Activated CD8-positive, alpha-beta T cell treated with anti-CD3 and anti-CD28 coated beads for 36 hours (primary cell): ENCODE measurements at regions of chr2 and their contacts with region 1.

Region 1: GRCh38 chr2:157327621-157328500 is 2.2 kb upstream of the ERMN start:
- DNase-seq: peak; percentile 95
- ATAC-seq: peak; percentile 93
- H3K4me3 Mint-ChIP-seq: peak overlapping the region; percentile 45
- H3K27ac Mint-ChIP-seq: peak overlapping the region; percentile 80
- H3K4me1 Mint-ChIP-seq: peaks cover 59% of the 10 kb centered on the region
- H3K27me3 Mint-ChIP-seq: no peaks in the 10 kb centered on the region
- CTCF ChIP-seq: peak; percentile 93

Region 2: GRCh38 chr2:157221394-157221988 is 106.4 kb before region 1 on chr2:
- CTCF ChIA-PET with region 1: no interaction called
- POLR2A ChIA-PET with region 1: no interaction called
- intact Hi-C with region 1: no loop called
- DNase-seq: no peak
- ATAC-seq: no peak
- H3K4me3 Mint-ChIP-seq: no peak overlapping the region
- H3K27ac Mint-ChIP-seq: no peak overlapping the region
- H3K4me1 Mint-ChIP-seq: no peaks in the 10 kb centered on the region
- H3K27me3 Mint-ChIP-seq: peaks cover 8% of the 10 kb centered on the region
- CTCF ChIP-seq: no peak

Region 3: GRCh38 chr2:157349949-157350515 is 22.2 kb after region 1 on chr2:
- CTCF ChIA-PET with region 1: interaction called, 166 read pairs
- POLR2A ChIA-PET with region 1: interaction called, 5 read pairs
- intact Hi-C with region 1: no loop called
- DNase-seq: no peak
- ATAC-seq: no peak
- H3K4me3 Mint-ChIP-seq: no peak overlapping the region
- H3K27ac Mint-ChIP-seq: no peak overlapping the region
- H3K4me1 Mint-ChIP-seq: peaks cover 43% of the 10 kb centered on the region
- H3K27me3 Mint-ChIP-seq: no peaks in the 10 kb centered on the region
- CTCF ChIP-seq: no peak

Region 4: DNA sequence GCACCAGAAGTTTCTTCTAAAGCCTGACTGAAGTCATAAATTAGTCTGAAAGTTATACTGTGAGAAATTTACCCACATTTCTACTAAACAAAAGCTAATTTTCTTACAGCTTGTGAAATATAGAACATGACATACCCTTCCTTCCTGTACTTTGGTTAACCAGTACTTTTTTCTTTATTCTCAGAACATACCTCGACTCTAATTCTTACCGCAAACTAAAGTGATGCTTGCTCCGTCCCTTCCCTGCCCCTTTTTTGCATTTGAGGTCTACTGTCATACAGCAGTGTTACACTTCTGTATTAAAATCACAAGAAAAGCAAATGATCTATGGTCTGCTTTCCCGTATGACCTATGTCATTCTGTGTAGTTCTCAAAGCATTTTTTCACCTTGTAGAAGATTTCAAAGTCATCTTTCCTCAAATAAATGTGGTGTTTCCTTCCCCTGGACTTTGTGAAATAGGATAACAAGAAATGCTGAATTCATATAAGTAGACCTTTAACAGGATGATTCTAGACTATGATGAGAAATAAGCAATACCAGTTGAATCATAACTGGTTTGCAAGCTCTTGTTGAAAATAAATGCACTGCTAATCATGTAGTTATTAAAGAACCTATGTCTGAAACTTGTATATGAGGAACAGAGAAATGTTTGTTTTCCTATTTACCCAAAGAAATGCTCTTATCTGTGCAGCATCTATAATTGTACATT is 85.6 kb after region 1 on chr2:
- CTCF ChIA-PET with region 1: interaction called, 172 read pairs
- POLR2A ChIA-PET with region 1: interaction called, 52 read pairs
- intact Hi-C with region 1: loop called (anchors 5 kb)
- DNase-seq: peak; percentile 71
- ATAC-seq: peak; percentile 65
- H3K4me3 Mint-ChIP-seq: peak overlapping the region; percentile 58
- H3K27ac Mint-ChIP-seq: peak overlapping the region; percentile 97
- H3K4me1 Mint-ChIP-seq: peaks cover 85% of the 10 kb centered on the region
- H3K27me3 Mint-ChIP-seq: no peaks in the 10 kb centered on the region
- CTCF ChIP-seq: no peak

Region 5: GRCh38 chr2:157433394-157433793 is 105.5 kb after region 1 on chr2:
- CTCF ChIA-PET with region 1: interaction called, 31 read pairs
- POLR2A ChIA-PET with region 1: interaction called, 10 read pairs
- intact Hi-C with region 1: no loop called
- DNase-seq: no peak
- ATAC-seq: no peak
- H3K4me3 Mint-ChIP-seq: peak overlapping the region; percentile 90
- H3K27ac Mint-ChIP-seq: peak overlapping the region; percentile 94
- H3K4me1 Mint-ChIP-seq: peaks cover 51% of the 10 kb centered on the region
- H3K27me3 Mint-ChIP-seq: no peaks in the 10 kb centered on the region
- CTCF ChIP-seq: no peak

Region 6: GRCh38 chr2:157480182-157480961 is 152.5 kb after region 1 on chr2:
- CTCF ChIA-PET with region 1: interaction called, 12 read pairs
- POLR2A ChIA-PET with region 1: interaction called, 6 read pairs
- intact Hi-C with region 1: no loop called
- DNase-seq: peak; percentile 79
- ATAC-seq: peak; percentile 66
- H3K4me3 Mint-ChIP-seq: peak overlapping the region; percentile 80
- H3K27ac Mint-ChIP-seq: peak overlapping the region; percentile 98
- H3K4me1 Mint-ChIP-seq: peaks cover 82% of the 10 kb centered on the region
- H3K27me3 Mint-ChIP-seq: no peaks in the 10 kb centered on the region
- CTCF ChIP-seq: no peak

Region 7: GRCh38 chr2:157603198-157603597 is 275.3 kb after region 1 on chr2:
- CTCF ChIA-PET with region 1: interaction called, 16 read pairs
- POLR2A ChIA-PET with region 1: no interaction called
- intact Hi-C with region 1: no loop called
- DNase-seq: no peak
- ATAC-seq: no peak
- H3K4me3 Mint-ChIP-seq: no peak overlapping the region
- H3K27ac Mint-ChIP-seq: no peak overlapping the region
- H3K4me1 Mint-ChIP-seq: no peaks in the 10 kb centered on the region
- H3K27me3 Mint-ChIP-seq: peaks cover 2% of the 10 kb centered on the region
- CTCF ChIP-seq: no peak

Region 8: DNA sequence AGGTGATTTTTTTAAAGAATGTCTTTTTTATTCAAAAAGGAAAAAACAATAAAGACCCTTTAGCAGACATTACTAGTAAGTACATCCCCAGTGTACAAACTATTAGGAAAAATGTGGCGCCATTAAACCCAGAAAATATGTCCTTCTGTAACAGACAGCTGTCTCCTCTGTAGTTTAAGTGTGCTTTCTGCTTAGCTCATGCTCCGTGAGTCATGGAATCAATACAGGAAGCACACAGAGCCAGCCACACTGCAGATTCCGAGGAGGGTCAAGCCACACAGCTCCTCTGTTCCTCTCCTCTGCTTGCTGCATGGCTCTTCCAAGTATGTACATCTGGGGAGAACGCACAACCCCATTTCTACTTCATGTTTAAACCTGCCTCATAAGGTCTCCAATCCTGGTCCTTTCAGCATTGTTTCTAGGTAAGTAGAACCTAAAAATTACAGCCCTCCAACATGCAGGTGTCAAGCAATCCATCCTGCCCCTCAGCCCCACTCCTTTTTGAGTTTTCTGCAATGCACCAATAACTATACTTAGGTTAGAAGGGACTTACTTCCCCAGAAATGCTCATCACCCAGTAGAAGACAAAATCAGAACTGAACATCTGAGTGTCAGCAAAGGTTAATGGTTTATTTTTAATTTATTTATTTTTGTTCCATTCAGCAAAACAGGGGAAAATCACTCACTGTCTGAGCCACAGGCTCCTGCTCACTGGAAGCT is 510.7 kb after region 1 on chr2:
- CTCF ChIA-PET with region 1: no interaction called
- POLR2A ChIA-PET with region 1: no interaction called
- intact Hi-C with region 1: no loop called
- DNase-seq: peak; percentile 35
- ATAC-seq: peak; percentile 89
- H3K4me3 Mint-ChIP-seq: no peak overlapping the region
- H3K27ac Mint-ChIP-seq: peak overlapping the region; percentile 28
- H3K4me1 Mint-ChIP-seq: peaks cover 39% of the 10 kb centered on the region
- H3K27me3 Mint-ChIP-seq: no peaks in the 10 kb centered on the region
- CTCF ChIP-seq: no peak